HCT116 (cell line): ENCODE measurements at regions of chr15 and their contacts with region 1.

Region 1: DNA sequence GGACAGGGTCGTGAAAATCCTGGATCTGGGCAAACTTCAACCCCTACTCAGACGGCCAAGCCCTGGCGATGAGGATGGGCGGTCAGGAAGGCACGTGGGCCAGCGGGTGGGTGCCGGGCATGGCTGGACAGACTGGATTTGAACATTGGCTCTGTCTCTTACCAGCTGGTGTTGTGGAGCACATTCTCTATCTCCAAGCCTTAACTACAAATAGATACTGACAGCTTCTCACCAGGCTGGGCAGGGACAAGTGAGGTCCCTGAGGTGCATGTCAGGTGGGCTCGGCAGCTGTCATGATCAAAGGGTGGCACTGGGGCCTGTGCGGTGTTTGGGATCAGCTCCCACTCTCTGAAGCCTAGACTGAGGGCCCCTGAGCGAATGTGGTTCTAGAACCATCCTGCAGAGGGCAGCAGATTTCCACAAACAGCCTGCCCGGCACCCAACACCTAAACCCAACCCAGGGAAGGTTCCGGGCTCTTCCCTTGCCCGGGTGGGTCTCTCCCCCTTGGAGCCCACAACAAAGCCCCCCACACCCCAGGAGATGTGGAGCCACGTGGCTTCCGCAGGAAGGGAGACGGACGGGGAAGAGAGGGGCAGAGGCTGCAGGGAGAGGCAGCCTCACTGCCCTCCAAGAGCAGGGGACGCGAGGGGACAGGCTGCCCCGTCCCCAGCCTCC is 58.4 kb downstream of the RGMA start:
- DNase-seq: peak; percentile 48
- ATAC-seq: peak; percentile 91
- H3K4me3 ChIP-seq: no peak overlapping the region
- H3K27ac ChIP-seq: no peak overlapping the region
- H3K4me1 ChIP-seq: peaks cover 0 to under 1% of the 10 kb centered on the region in 2 experiments; a peak in 1 of 4 replicates
- H3K27me3 ChIP-seq: no peaks in the 10 kb centered on the region
- CTCF ChIP-seq: peak; percentile 75 to 85 (median 80); a peak in 5 of 6 replicates
- POLR2A ChIP-seq: no peak
- RAD21 ChIP-seq: peak; percentile 89

Region 2: GRCh38 chr15:92797168-92797951 is 233.2 kb before region 1 on chr15:
- CTCF ChIA-PET with region 1: interaction called, 19 read pairs
- POLR2A ChIA-PET with region 1: interaction called, 4 read pairs
- RAD21 ChIA-PET with region 1: interaction called, 4 to 5 read pairs
- intact Hi-C with region 1: no loop called
- DNase-seq: peak; percentile 73
- ATAC-seq: peak; percentile 54
- H3K4me3 ChIP-seq: no peak overlapping the region
- H3K27ac ChIP-seq: 0 out of 2 replicates have a peak overlapping the region, but pooled peaks have one; percentile 1
- H3K4me1 ChIP-seq: peaks cover 27 to 45% of the 10 kb centered on the region in 2 experiments
- H3K27me3 ChIP-seq: no peaks in the 10 kb centered on the region
- CTCF ChIP-seq: peak in 2 of 3 experiments; percentile 59 to 81; a peak in 4 of 6 replicates
- POLR2A ChIP-seq: no peak
- RAD21 ChIP-seq: no peak

Region 3: DNA sequence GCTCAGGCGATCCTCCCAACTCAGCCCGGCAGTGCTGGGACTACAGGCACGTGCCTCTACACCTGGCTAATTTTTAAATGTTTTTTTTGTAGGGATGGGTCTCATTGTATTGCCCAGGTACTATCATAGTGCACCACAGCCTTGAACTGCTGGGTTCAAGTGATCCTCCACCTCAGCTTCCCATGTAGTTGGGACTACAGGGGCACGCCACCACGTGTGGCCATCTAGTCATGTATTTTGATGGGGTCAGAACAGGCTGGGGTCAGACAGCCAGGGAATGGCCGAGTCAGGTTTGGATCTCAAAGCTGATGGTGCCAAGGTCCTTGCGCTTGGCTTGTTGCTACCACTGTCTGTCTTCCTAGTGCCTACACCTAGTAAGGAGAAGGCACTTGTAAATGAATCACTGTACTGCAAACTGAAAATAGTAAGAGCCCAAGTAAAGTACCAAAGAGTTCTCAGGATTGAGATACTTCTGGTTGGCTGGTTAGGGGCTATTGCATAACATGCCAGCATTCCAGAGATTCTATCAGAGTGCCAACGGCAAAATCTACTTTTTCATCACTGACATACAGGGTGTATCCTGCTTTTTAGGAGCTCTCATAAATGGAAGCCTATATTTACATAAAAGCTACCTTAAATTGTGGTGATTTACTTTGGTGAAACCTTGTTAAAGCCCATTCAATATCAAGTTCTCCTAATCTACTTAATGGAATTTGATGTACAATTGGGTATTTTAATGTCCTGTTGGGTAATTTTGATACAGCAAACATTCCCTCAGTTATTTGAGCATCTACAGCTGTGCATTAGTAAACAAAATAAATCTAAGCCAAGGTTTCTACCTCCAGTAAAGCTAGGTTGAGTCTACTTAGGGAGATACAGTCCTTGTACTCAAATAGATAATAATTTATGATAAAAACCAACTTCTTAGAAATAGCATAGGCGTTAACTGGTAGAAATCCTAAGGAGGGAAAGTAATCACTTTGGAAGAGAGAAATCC is 161.3 kb before region 1 on chr15:
- CTCF ChIA-PET with region 1: no interaction called
- POLR2A ChIA-PET with region 1: no interaction called
- RAD21 ChIA-PET with region 1: no interaction called
- intact Hi-C with region 1: no loop called
- DNase-seq: no peak
- ATAC-seq: no peak
- H3K4me3 ChIP-seq: no peak overlapping the region
- H3K27ac ChIP-seq: no peak overlapping the region
- H3K4me1 ChIP-seq: peaks cover 4 to 8% of the 10 kb centered on the region in 2 experiments; a peak in 3 of 4 replicates
- H3K27me3 ChIP-seq: no peaks in the 10 kb centered on the region
- CTCF ChIP-seq: no peak
- POLR2A ChIP-seq: no peak
- RAD21 ChIP-seq: no peak

Region 4: GRCh38 chr15:93087825-93088199 is 57.2 kb after region 1 on chr15:
- CTCF ChIA-PET with region 1: interaction called, 11 read pairs
- POLR2A ChIA-PET with region 1: no interaction called
- RAD21 ChIA-PET with region 1: no interaction called
- intact Hi-C with region 1: no loop called
- DNase-seq: peak; percentile 22
- ATAC-seq: peak; percentile 93
- H3K4me3 ChIP-seq: no peak overlapping the region
- H3K27ac ChIP-seq: no peak overlapping the region
- H3K4me1 ChIP-seq: peaks cover 0 to 5% of the 10 kb centered on the region in 2 experiments; a peak in 1 of 4 replicates
- H3K27me3 ChIP-seq: peaks cover 40% of the 10 kb centered on the region
- CTCF ChIP-seq: peak; percentile 63 to 89 (median 87); a peak in 5 of 6 replicates
- POLR2A ChIP-seq: no peak
- RAD21 ChIP-seq: peak; percentile 77

Region 5: DNA sequence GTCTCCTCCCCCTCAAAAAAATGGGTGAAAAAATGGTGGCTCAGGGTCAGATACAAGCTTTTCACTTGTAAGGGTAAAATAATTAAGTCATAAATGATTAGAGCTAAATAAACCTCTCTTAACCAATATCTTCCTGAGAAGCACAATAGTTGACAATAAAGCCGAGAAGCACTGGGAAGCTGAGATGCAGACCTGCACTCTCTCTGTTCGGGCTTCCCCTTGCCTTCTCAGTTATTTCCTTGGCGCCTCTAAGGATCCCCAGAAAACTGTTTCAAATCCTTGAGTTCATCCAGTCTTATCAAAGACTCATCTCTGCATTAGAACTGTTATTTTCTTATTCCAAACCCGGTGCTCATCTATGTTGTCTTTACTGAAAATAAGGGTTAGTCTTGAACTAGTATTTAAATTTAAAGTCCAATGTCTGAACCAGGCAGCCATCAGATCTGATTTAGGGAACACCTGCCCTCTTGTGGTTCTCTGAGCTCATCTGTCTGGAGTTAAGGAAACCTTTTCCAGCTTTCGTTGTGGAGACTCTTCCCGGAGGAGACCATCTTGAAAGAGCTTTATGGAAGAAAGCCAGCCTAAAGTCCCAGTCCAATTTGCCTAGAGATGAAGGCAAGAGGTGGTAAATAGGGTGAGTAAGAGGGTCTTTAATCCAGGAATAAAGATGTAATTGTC is 944.4 kb after region 1 on chr15:
- CTCF ChIA-PET with region 1: interaction called, 13 read pairs
- POLR2A ChIA-PET with region 1: no interaction called
- RAD21 ChIA-PET with region 1: interaction called in 1 of 2 experiments, 3 read pairs
- intact Hi-C with region 1: no loop called
- DNase-seq: peak; percentile 2
- ATAC-seq: peak; percentile 49; the same call in 1 of the 2 replicates
- H3K4me3 ChIP-seq: no peak overlapping the region
- H3K27ac ChIP-seq: no peak overlapping the region
- H3K4me1 ChIP-seq: no peaks in the 10 kb centered on the region
- H3K27me3 ChIP-seq: no peaks in the 10 kb centered on the region
- CTCF ChIP-seq: peak in 2 of 3 experiments; percentile 35 to 46; a peak in 4 of 6 replicates
- POLR2A ChIP-seq: no peak
- RAD21 ChIP-seq: peak; percentile 31; the same call in 1 of the 2 replicates

Region 6: GRCh38 chr15:94324117-94324826 is 1293.7 kb after region 1 on chr15:
- CTCF ChIA-PET with region 1: no interaction called
- POLR2A ChIA-PET with region 1: no interaction called
- RAD21 ChIA-PET with region 1: no interaction called
- intact Hi-C with region 1: loop called (anchors 5 kb)
- DNase-seq: peak; percentile 15
- ATAC-seq: peak; percentile 93
- H3K4me3 ChIP-seq: no peak overlapping the region
- H3K27ac ChIP-seq: no peak overlapping the region
- H3K4me1 ChIP-seq: no peaks in the 10 kb centered on the region; a peak in 1 of 4 replicates
- H3K27me3 ChIP-seq: no peaks in the 10 kb centered on the region
- CTCF ChIP-seq: peak; percentile 80 to 95 (median 85)
- POLR2A ChIP-seq: no peak
- RAD21 ChIP-seq: peak; percentile 87